ENCODE measurements at regions of chr7 and their contacts with region 1.

Region 1: GRCh38 chr7:73342645-73343044 is 14.7 kb downstream of the FKBP6 start:
- DNase-seq: no peak
- ATAC-seq: peak; percentile 60
- H3K4me3 ChIP-seq: no peak overlapping the region
- H3K27ac ChIP-seq: no peak overlapping the region
- H3K4me1 ChIP-seq: no peaks in the 10 kb centered on the region
- H3K27me3 ChIP-seq: no peaks in the 10 kb centered on the region

Region 2: DNA sequence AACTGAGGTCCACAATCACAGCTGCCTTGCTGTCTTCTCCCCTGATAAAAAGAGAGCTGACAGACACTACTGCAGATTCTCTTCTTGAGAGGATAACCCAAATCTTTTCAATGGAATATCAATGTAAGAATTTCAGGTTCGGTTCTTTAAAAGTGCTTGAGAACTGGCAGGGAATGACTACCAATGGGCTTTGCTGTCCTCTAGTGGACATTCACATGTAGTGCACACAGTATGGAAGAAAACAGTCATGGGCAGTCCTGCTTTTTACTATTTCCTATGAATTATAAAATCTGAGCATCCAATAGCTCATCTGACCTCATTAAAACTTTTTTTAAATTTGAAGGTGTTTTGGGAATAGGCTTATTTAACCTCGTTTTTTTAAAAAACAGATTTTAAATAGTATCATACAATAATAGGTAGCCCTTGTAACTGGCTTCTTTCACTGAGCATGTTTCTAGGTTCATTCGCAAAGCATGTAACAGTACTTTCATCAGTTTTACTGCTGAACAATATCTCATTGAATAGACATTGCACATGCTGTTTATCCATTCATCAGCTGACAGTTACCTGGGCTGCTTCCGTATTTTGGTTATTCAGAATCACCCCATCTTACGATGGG is 109.2 kb after region 1 on chr7:
- intact Hi-C with region 1: loop called (anchors 1 to 2 kb)
- DNase-seq: no peak
- ATAC-seq: peak; percentile 87
- H3K4me3 ChIP-seq: no peak overlapping the region
- H3K27ac ChIP-seq: no peak overlapping the region
- H3K4me1 ChIP-seq: no peaks in the 10 kb centered on the region
- H3K27me3 ChIP-seq: no peaks in the 10 kb centered on the region